ENCODE measurements at regions of chr12 and their contacts with region 1.

Region 1: GRCh38 chr12:113422030-113422885 is at the start of gene SDSL:
- DNase-seq: peak; percentile 80 to 94 (median 93)
- H3K4me3 ChIP-seq: peak within 1 kb of the TSS in 3 of 4 donors; percentile 18 to 62 (median 49)
- H3K27ac ChIP-seq: peak within 1 kb of the TSS; percentile 34 to 90 (median 65)
- H3K4me1 ChIP-seq: peaks cover 20 to 33% of the 10 kb centered on the region in 2 donors
- H3K27me3 ChIP-seq: no peaks in the 10 kb centered on the region
- CTCF ChIP-seq: no peak
- POLR2A ChIP-seq: peak in 1 of 2 donors; percentile 69
- total RNA-seq, gene SDSL: 11.6 to 111 (median 25.9) TPM

Region 2: GRCh38 chr12:113184900-113185773 is 237.1 kb before region 1 on chr12 and contains the starts of genes DDX54 and RITA1:
- intact Hi-C with region 1: loop called in 1 of 2 experiments (anchors 10 kb)
- DNase-seq: peak; percentile 87 to 93 (median 92)
- H3K4me3 ChIP-seq: peak within 1 kb of the TSS; percentile 30 to 95 (median 64)
- H3K27ac ChIP-seq: peak within 1 kb of the TSS; percentile 69 to 98 (median 90)
- H3K4me1 ChIP-seq: peaks cover 16 to 35% of the 10 kb centered on the region in 2 donors
- H3K27me3 ChIP-seq: no peaks in the 10 kb centered on the region
- CTCF ChIP-seq: peak in 1 of 6 experiments; percentile 12
- POLR2A ChIP-seq: peak; percentile 51 to 63
- total RNA-seq, gene DDX54: 41.9 to 109 (median 78.3) TPM
- total RNA-seq, gene RITA1: 31.7 to 84.1 (median 41.2) TPM

Region 3: GRCh38 chr12:113310489-113310888 is 111.8 kb before region 1 on chr12:
- intact Hi-C with region 1: loop called (anchors 5 to 10 kb)
- DNase-seq: no peak
- H3K4me3 ChIP-seq: no peak overlapping the region
- H3K27ac ChIP-seq: no peak overlapping the region
- H3K4me1 ChIP-seq: no peaks in the 10 kb centered on the region
- H3K27me3 ChIP-seq: no peaks in the 10 kb centered on the region
- CTCF ChIP-seq: no peak
- POLR2A ChIP-seq: no peak

Measured in adrenal gland (tissue), 19 donors.